ENCODE measurements at regions of chr6 and their contacts with region 1.

Region 1: GRCh38 chr6:116570856-116571682 is at the start of gene RWDD1:
- DNase-seq: peak; percentile 94
- ATAC-seq: peak; percentile 94
- H3K4me3 Mint-ChIP-seq: peak within 1 kb of the TSS; percentile 95
- H3K27ac Mint-ChIP-seq: peak within 1 kb of the TSS; percentile 96
- H3K4me1 Mint-ChIP-seq: peaks cover 51% of the 10 kb centered on the region
- H3K27me3 Mint-ChIP-seq: no peaks in the 10 kb centered on the region
- CTCF ChIP-seq: no peak
- total RNA-seq, gene RWDD1: 30.9 and 33.8 TPM in 2 replicates

Region 2: DNA sequence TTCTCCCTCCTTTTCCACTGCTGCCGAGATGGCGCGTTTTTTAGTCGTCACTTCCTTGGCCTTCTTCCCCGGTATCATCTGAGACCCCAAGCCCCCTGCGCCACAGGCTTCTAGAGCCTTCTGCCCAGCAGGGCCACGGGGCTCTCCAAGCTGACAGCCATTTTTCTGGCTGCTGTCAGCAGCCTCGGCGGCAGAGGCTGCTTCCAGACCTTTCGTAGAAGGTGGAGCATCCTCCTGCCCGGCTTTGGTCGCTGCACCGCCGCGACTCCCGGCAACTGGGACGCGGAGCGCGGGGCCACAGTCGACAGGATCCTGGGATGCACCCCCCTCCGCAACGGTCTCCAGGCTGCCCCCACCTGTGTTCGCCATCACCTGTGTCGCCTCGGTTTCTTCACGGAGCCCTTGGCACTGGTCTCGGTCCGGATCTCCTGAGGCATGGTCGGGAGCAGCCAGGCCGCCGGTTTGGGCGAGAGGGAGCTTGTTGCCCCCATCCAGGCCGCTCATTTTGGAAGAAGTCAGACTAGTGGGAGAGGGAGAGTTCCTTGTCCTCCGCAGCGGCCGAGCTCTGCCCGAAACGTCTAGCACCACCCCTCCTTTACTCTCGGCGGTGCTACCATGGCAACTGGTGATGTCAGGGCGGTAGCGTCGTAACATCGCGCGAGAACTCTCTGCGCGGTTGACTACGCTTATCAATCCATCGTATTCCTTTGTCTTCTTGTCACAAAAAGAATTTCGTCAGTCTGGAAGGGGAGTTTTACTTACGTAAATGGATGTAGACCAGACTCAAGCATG is 317.4 kb before region 1 on chr6 and contains the start of gene TSPYL4:
- CTCF ChIA-PET with region 1: no interaction called
- POLR2A ChIA-PET with region 1: interaction called, 24 read pairs
- intact Hi-C with region 1: loop called (anchors 1 kb)
- DNase-seq: peak; percentile 80
- ATAC-seq: peak; percentile 98
- H3K4me3 Mint-ChIP-seq: no peak within 1 kb of the TSS
- H3K27ac Mint-ChIP-seq: no peak within 1 kb of the TSS
- H3K4me1 Mint-ChIP-seq: peaks cover 1% of the 10 kb centered on the region
- H3K27me3 Mint-ChIP-seq: no peaks in the 10 kb centered on the region
- CTCF ChIP-seq: no peak
- total RNA-seq, gene TSPYL4: 16.0 and 16.7 TPM in 2 replicates

Region 3: DNA sequence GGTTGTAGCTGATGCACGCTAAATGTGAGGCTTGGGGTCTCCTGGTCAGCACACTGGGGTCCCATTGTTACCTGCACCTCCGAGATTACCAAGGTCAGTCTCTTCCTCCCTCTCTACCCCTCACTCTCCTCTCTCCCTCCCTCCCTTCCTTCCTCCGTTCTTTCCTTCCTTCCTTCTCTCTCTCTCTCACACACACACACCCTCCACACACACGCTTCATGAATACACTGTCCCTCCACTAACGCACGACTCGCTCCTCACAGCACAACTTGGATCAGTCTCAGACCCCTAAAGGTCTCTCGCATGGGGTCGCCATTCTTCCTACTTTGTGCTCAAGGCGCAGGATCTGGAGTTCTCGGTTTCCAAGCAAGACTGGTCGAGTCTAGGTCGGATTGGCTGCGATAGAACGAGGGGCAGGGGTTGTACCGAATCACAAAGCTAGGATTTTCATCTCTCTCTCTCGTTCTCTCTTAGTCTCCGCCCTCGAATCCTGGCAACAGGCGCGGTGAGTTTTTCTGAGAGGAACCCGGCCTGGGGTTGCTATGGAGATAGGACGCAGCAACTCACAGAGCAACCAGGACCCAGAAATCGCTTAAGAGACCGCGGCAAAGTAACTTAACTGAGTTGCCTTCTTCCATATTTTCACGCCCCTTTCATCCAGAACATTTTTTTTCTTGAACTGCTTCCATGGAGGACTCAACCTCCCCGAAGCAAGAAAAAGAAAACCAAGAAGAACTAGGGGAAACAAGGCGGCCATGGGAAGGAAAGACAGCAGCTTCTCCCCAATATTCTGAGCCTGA is 45.1 kb after region 1 on chr6 and contains the start of gene RSPH4A:
- CTCF ChIA-PET with region 1: no interaction called
- POLR2A ChIA-PET with region 1: interaction called, 9 read pairs
- intact Hi-C with region 1: loop called (anchors 1 kb)
- DNase-seq: peak; percentile 34
- ATAC-seq: peak; percentile 95
- H3K4me3 Mint-ChIP-seq: peak within 1 kb of the TSS; percentile 84
- H3K27ac Mint-ChIP-seq: peak within 1 kb of the TSS; percentile 8
- H3K4me1 Mint-ChIP-seq: peaks cover 18% of the 10 kb centered on the region
- H3K27me3 Mint-ChIP-seq: peaks cover under 1% of the 10 kb centered on the region
- CTCF ChIP-seq: no peak
- total RNA-seq, gene RSPH4A: 0.39 and 0.40 TPM in 2 replicates

Region 4: GRCh38 chr6:116648156-116648555 is 77.1 kb after region 1 on chr6:
- CTCF ChIA-PET with region 1: no interaction called
- POLR2A ChIA-PET with region 1: no interaction called
- intact Hi-C with region 1: loop called (anchors 2 kb)
- DNase-seq: no peak
- ATAC-seq: no peak
- H3K4me3 Mint-ChIP-seq: no peak overlapping the region
- H3K27ac Mint-ChIP-seq: no peak overlapping the region
- H3K4me1 Mint-ChIP-seq: peaks cover 2% of the 10 kb centered on the region
- H3K27me3 Mint-ChIP-seq: no peaks in the 10 kb centered on the region
- CTCF ChIP-seq: no peak

Region 5: GRCh38 chr6:116667623-116668022 is 96.6 kb after region 1 on chr6:
- CTCF ChIA-PET with region 1: no interaction called
- POLR2A ChIA-PET with region 1: interaction called, 9 read pairs
- intact Hi-C with region 1: loop called (anchors 1 kb)
- DNase-seq: no peak
- ATAC-seq: peak; percentile 62
- H3K4me3 Mint-ChIP-seq: peak overlapping the region; percentile 100
- H3K27ac Mint-ChIP-seq: peak overlapping the region; percentile 99
- H3K4me1 Mint-ChIP-seq: peaks cover 41% of the 10 kb centered on the region
- H3K27me3 Mint-ChIP-seq: peaks cover 8% of the 10 kb centered on the region
- CTCF ChIP-seq: no peak